Body of pancreas (tissue), 4 donors: ENCODE measurements at regions of chr19 and their contacts with region 1.

Region 1: DNA sequence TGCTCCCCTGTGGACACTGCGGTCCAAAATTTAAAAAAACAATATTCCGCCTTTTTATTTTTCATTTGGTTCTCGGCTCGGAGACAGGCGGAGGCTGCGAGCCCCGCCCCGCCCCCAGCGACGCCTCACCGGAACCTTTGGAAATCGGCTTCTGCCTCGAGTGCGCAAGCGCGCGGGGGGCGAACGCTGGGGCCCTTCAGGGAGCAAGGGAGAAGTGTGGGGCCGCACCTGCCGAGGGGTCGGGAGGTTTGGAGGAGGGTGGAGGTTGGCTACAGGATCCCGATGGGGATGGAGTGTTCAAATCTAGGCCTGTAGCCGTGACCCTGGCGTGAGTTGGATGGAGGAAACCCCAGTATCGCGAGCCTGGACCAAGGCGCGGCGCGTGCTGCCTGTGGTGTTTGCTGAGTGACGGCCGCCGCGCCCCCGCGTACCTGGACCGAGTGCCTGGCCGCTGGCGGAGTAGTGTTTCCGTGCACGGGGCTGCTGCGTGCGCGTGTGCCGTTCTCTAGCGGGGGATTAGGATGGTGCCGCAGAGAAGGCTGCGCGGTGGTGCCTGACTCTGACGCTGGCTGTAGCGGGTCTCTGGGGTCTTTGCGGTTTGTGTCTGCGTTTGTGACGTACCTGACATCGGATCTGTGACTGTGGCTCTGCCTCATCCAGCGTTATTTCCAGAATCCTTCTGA is 565 bp upstream of the ZFP30 start:
- DNase-seq: peak; percentile 79 to 86 (median 84)
- ATAC-seq: peak; percentile 83
- H3K4me3 ChIP-seq: peak overlapping the region; percentile 47 to 87
- H3K27ac ChIP-seq: peak overlapping the region; percentile 60 to 94 (median 80)
- H3K4me1 ChIP-seq: peaks cover 12% of the 10 kb centered on the region
- H3K27me3 ChIP-seq: no peaks in the 10 kb centered on the region
- CTCF ChIP-seq: peak in 1 of 7 experiments; percentile 13
- POLR2A ChIP-seq: peak in 1 of 3 donors; percentile 46

Region 2: DNA sequence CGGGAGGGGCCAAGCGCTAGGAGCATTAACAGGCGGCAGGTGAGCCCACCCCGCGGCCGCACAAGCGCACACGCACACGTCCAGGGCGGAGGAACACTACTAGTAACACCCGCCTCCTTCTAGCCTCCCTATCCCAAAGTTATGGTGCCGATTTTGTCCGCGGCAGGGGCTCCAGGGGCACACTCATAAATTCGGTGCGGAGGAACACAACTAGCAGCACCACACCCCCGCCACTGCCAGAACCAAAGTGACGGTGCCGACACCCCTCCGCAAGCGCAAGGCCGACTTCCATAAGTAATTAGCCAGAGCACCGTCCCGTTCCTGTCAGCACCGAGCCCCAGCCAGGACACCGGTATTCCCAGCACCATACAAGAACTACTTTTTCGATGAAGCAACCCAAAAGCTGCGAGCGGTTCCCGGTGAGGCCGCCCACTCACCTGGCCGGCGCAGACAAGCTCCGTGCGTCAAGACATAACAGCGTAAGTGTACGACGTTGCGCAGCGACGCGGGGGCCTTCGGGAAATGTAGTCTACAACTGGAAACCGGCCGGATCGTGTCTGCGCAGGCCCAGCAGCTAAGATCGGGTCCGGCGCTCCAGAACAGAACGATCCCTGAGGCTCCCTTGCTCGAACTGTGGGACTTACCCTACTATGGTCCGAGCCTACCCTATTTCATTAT is 61.4 kb before region 1 on chr19 and contains the starts of genes ZNF540 and ZNF571:
- intact Hi-C with region 1: loop called (anchors 10 kb)
- DNase-seq: peak; percentile 95 to 98 (median 97)
- ATAC-seq: peak; percentile 98
- H3K4me3 ChIP-seq: peak within 1 kb of the TSS; percentile 44 to 58
- H3K27ac ChIP-seq: peak within 1 kb of the TSS; percentile 88 to 97 (median 95)
- H3K4me1 ChIP-seq: peaks cover 20% of the 10 kb centered on the region
- H3K27me3 ChIP-seq: no peaks in the 10 kb centered on the region
- CTCF ChIP-seq: no peak
- POLR2A ChIP-seq: peak; percentile 51 to 84 (median 82)
- total RNA-seq, gene ZNF540: 2.6 to 6.5 TPM
- total RNA-seq, gene ZNF571: 1.6 to 2.6 TPM

Region 3: DNA sequence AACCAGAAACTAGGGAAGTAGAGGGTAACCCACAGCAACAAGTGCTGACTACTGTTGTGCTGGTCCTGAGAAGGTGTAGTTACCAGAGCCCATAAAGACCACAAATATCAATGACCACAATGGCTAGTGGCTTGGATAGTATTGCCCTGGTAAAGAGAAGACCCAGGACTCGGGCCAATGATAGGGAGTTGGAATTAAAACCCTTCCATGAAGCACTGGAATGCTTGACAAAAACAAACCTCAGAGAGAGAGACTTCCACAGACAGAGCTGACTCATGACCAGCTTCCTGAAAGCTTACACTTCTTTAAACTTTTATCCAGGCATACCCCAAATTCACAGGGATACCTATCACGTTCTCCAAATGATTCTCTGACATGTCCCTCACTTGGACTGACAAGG is 190.1 kb after region 1 on chr19:
- intact Hi-C with region 1: no loop called
- DNase-seq: no peak
- ATAC-seq: no peak
- H3K4me3 ChIP-seq: no peak overlapping the region
- H3K27ac ChIP-seq: no peak overlapping the region
- H3K4me1 ChIP-seq: no peaks in the 10 kb centered on the region
- H3K27me3 ChIP-seq: no peaks in the 10 kb centered on the region
- CTCF ChIP-seq: no peak
- POLR2A ChIP-seq: no peak